ENCODE measurements at regions of chr1 and their contacts with region 1.

Region 1: GRCh38 chr1:94541175-94542087 is at the start of gene F3:
- DNase-seq: peak; percentile 68
- H3K4me3 Mint-ChIP-seq: peak within 1 kb of the TSS; percentile 86
- H3K27ac Mint-ChIP-seq: peak within 1 kb of the TSS; percentile 33
- H3K4me1 Mint-ChIP-seq: peaks cover 20% of the 10 kb centered on the region
- H3K27me3 Mint-ChIP-seq: peaks cover 79% of the 10 kb centered on the region
- total RNA-seq, gene F3: 0.16 and 0.32 TPM in 2 replicates

Region 2: DNA sequence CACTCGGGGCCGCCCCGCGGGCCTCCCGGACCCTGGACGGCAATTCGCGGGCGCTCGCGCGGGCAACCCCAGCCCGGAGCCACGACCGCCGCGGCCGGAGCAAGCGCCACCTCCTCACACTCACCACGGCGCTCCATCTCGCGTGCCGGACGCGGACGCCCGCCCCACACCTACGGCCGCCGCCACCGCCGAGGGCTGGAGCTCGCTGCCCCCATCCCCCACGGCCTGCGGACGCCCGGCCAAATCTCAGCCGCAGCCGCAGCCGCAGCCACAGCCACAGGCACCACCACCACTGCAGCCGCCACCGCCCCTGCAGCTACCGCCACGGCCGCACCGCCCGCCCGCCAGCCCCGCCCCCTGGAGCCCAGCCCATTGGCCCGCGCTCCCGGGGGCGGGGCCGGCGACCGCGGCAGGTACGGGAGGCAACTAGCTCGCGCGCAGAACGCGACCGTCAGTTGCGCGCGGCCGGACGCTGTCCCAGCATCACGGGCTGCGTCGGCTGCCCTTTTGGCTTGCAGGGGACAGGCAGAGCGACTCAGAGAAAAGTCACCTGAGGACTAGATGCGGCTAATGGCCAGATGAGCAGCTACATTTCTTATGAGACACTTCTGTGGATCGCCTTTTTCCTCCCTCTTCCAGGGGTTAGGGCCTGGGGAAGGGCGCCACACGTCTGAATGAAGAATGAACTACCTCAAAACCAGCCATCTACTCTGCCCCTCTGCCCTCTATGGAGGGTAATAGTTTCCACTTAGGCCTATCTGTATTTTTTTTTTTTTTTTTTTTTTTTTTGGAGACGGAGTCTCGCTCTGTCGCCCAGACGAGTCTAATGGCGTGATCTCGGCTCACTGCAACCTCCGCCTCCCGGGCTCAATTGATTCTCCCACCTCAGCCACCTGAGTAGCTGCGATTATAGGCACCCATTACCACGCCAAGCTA is 303.9 kb before region 1 on chr1 and contains the start of gene ARHGAP29:
- intact Hi-C with region 1: loop called (anchors 10 kb)
- DNase-seq: peak; percentile 40
- H3K4me3 Mint-ChIP-seq: peak within 1 kb of the TSS; percentile 46
- H3K27ac Mint-ChIP-seq: no peak within 1 kb of the TSS
- H3K4me1 Mint-ChIP-seq: peaks cover 9% of the 10 kb centered on the region
- H3K27me3 Mint-ChIP-seq: peaks cover 65% of the 10 kb centered on the region
- total RNA-seq, gene ARHGAP29: not detected in 2 replicates

Region 3: DNA sequence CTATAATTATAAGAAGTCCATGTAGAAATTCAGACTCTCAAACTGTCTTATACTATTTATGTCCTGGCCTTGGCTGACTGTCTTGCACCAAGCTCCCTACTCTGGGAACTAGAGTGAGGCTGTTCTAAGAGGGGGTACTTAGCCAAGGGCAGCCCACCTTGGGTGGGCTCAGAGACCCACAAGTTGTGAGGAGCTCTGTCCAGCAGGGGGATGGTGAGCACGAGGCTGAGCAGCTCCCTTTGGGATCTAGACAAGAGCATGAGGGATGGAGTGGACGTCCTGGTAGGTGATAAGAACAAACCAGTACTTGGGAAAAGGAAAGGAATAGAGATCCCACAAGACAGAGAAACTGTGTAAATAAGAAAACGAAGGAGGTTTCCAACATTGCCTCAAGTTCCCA is 151.6 kb after region 1 on chr1:
- intact Hi-C with region 1: no loop called
- DNase-seq: no peak
- H3K4me3 Mint-ChIP-seq: no peak overlapping the region
- H3K27ac Mint-ChIP-seq: no peak overlapping the region
- H3K4me1 Mint-ChIP-seq: no peaks in the 10 kb centered on the region
- H3K27me3 Mint-ChIP-seq: peaks cover 12% of the 10 kb centered on the region

Region 4: DNA sequence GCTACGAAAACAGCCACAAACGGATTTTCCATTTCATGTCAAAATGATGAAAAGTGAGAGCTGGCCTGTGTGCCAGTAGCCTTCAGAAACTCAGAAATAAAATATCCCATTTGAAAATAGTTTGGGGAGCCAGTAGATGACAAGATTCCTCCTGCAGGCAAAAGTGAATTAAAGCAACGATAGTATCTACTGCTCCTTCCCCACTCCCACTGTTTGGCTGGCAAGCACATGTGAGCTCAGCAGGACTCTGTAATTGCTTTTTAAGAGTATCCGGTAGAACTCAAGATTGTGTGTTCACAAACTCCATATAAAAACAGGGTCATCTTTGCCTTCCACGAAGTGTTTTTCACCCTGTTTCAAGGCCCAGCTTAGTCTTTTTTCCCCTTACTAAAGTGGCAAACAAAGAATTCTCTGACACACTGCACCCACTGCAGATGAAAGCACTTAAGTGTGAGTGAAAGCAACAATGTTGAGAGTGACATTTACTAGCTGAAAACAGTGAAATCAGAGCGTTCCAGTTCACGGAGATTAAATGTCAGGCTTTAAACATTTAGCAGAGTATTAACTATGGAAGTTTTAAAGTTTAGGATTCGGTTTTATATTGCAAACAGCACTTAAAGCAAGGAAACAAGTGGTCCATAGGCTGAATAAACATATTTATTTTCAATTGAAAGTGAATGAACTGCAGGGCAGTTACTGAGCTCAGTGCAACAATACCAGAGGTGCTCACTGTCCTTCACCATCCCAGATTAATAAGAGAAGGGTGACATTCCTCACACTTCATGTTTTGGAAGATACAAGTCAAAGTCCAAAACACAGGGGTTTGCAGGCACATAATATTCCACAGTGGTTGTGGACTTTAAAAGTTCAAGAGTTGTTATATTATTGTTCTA is 461.4 kb after region 1 on chr1:
- intact Hi-C with region 1: no loop called
- DNase-seq: no peak
- H3K4me3 Mint-ChIP-seq: no peak overlapping the region
- H3K27ac Mint-ChIP-seq: no peak overlapping the region
- H3K4me1 Mint-ChIP-seq: no peaks in the 10 kb centered on the region
- H3K27me3 Mint-ChIP-seq: peaks cover 1% of the 10 kb centered on the region